Mammary epithelial cell (primary cell): ENCODE measurements at regions of chr2 and their contacts with region 1.

Region 1: GRCh38 chr2:21567395-21567794 is 443.6 kb downstream of the TDRD15 start:
- DNase-seq: no peak
- H3K4me3 ChIP-seq: no peak overlapping the region
- H3K27ac ChIP-seq: no peak overlapping the region
- H3K4me1 ChIP-seq: no peaks in the 10 kb centered on the region
- H3K27me3 ChIP-seq: no peaks in the 10 kb centered on the region
- CTCF ChIP-seq: no peak

Region 2: DNA sequence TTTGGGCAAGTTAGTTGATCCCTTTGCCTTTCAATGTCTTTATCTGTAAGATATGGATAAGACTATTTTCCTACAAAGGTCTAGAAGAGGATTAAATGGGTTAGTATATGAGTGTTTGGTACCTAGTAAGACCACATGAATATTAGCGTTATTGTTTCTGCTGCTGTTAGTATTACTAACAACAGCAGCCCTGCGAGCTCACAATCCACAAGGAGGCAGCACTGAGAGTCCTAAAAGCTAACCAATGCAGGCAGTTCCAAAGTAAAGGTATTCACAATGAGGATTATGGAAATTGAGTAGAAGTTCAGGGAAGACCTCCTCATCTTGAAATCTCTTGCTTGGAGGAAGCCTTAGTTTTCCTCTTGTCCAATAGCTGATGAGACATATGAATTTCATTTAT is 194.7 kb before region 1 on chr2:
- CTCF ChIA-PET with region 1: interaction called, 23 read pairs
- dilution Hi-C with region 1: no loop called
- in situ Hi-C with region 1: no loop called
- intact Hi-C with region 1: no loop called
- DNase-seq: peak; percentile 15
- H3K4me3 ChIP-seq: no peak overlapping the region
- H3K27ac ChIP-seq: no peak overlapping the region
- H3K4me1 ChIP-seq: peaks cover under 1% of the 10 kb centered on the region
- H3K27me3 ChIP-seq: no peaks in the 10 kb centered on the region
- CTCF ChIP-seq: peak; percentile 62 to 63

Region 3: GRCh38 chr2:21486445-21486844 is 81.0 kb before region 1 on chr2:
- CTCF ChIA-PET with region 1: no interaction called
- dilution Hi-C with region 1: no loop called
- in situ Hi-C with region 1: no loop called
- intact Hi-C with region 1: no loop called
- DNase-seq: no peak
- H3K4me3 ChIP-seq: no peak overlapping the region
- H3K27ac ChIP-seq: no peak overlapping the region
- H3K4me1 ChIP-seq: no peaks in the 10 kb centered on the region
- H3K27me3 ChIP-seq: no peaks in the 10 kb centered on the region
- CTCF ChIP-seq: no peak

Region 4: DNA sequence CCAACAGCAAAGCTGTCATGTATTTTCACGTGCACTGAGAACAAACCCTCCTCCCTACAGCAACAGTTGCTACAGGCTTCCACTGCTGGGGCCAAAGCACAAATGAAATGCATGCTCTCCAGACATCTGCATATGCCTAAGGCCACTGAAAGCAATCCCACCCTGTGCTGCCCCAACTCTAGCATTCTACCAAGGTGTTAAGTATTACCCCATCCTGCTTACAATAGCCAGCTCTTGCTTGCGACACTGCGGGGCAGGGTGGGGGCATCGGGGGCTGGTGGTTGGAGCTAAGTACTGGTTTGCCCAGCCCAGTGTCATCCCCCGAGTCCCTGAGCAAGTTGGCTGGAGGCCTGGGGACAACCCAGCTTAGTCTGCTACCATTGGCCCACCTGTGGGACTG is 298.9 kb after region 1 on chr2:
- CTCF ChIA-PET with region 1: no interaction called
- dilution Hi-C with region 1: no loop called
- in situ Hi-C with region 1: no loop called
- intact Hi-C with region 1: no loop called
- DNase-seq: no peak
- H3K4me3 ChIP-seq: no peak overlapping the region
- H3K27ac ChIP-seq: no peak overlapping the region
- H3K4me1 ChIP-seq: no peaks in the 10 kb centered on the region
- H3K27me3 ChIP-seq: no peaks in the 10 kb centered on the region
- CTCF ChIP-seq: no peak